Activated CD8-positive, alpha-beta T cell treated with anti-CD3 and anti-CD28 coated beads, Interleukin-2, amount 10 ng/mL, durations not matched to agents 7 days and 5 days (primary cell): ENCODE measurements at regions of chr17 and their contacts with region 1.

Region 1: GRCh38 chr17:79970576-79971068 is 65.0 kb downstream of the TBC1D16 start:
- DNase-seq: peak; percentile 56
- ATAC-seq: peak; percentile 60
- H3K4me3 Mint-ChIP-seq: no peak overlapping the region
- H3K27ac Mint-ChIP-seq: no peak overlapping the region
- H3K4me1 Mint-ChIP-seq: peaks cover 3% of the 10 kb centered on the region
- H3K27me3 Mint-ChIP-seq: peaks cover 6% of the 10 kb centered on the region

Region 2: GRCh38 chr17:79789534-79790353 is 180.9 kb before region 1 on chr17:
- CTCF ChIA-PET with region 1: interaction called, 12 read pairs
- POLR2A ChIA-PET with region 1: no interaction called
- DNase-seq: no peak
- ATAC-seq: peak; percentile 50
- H3K4me3 Mint-ChIP-seq: no peak overlapping the region
- H3K27ac Mint-ChIP-seq: no peak overlapping the region
- H3K4me1 Mint-ChIP-seq: peaks cover 13% of the 10 kb centered on the region
- H3K27me3 Mint-ChIP-seq: peaks cover 50% of the 10 kb centered on the region

Region 3: GRCh38 chr17:79810130-79811010 is 160.3 kb before region 1 on chr17:
- CTCF ChIA-PET with region 1: interaction called, 11 read pairs
- POLR2A ChIA-PET with region 1: no interaction called
- DNase-seq: peak; percentile 85
- ATAC-seq: peak; percentile 94
- H3K4me3 Mint-ChIP-seq: peak overlapping the region; percentile 40
- H3K27ac Mint-ChIP-seq: no peak overlapping the region
- H3K4me1 Mint-ChIP-seq: peaks cover 42% of the 10 kb centered on the region
- H3K27me3 Mint-ChIP-seq: peaks cover 66% of the 10 kb centered on the region

Region 4: GRCh38 chr17:79844869-79845600 is 125.6 kb before region 1 on chr17:
- CTCF ChIA-PET with region 1: interaction called, 20 read pairs
- POLR2A ChIA-PET with region 1: no interaction called
- DNase-seq: peak; percentile 55
- ATAC-seq: peak; percentile 45
- H3K4me3 Mint-ChIP-seq: no peak overlapping the region
- H3K27ac Mint-ChIP-seq: no peak overlapping the region
- H3K4me1 Mint-ChIP-seq: peaks cover 29% of the 10 kb centered on the region
- H3K27me3 Mint-ChIP-seq: peaks cover 51% of the 10 kb centered on the region